HEK293 (cell line): ENCODE measurements at regions of chr17 and their contacts with region 1.

Region 1: DNA sequence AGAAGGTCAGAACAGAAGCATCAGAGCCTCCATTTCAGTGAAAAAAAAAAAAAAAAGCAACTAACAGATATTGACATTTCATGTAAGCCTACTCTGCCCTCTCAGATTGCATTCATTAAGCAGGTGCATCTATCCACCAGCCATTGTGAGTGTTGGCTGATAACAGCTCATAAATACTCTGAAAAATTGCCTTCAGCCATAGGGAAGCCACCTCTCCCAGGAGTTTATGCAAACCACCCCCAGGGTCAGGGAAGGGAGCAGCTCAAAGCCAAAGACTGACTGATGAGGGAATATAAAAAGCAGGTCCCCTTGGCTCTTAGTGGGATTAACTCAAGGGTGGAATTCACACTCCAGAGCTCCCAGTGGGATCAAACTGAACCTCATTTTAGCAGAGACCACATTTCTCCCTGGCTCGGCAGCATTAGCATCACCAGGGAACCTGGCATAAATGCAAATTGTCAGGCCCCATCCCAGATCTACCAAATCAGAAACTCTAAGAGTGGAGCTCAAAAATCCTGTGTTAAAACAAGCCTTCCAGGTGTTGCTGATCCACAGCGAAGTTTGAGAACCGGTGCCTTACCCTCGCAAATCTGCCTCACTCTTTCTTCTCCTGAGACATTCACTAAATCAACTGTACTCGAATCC is 14.2 kb downstream of the APOH start:
- H3K4me3 ChIP-seq: no peak overlapping the region
- H3K27ac ChIP-seq: no peak overlapping the region
- H3K4me1 ChIP-seq: no peaks in the 10 kb centered on the region
- CTCF ChIP-seq: no peak

Region 2: DNA sequence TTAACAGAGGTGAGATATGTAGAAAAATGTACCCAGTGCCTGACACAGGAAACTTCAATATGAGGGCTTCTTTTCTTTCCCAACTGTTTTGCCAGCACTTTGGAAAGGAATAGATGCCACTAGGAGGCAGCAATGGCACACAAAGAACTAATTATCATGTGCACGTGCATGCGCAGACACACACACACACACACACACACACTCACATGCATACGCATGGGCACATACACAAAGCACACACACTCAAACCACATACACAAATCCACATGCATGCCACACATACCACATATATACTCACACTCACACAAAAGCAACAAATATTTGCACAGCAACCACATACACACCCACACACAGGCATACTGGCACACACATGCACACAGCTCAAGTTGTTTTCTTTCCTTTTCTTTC is 14.3 kb before region 1 on chr17:
- CTCF ChIA-PET with region 1: interaction called, 27 read pairs
- POLR2A ChIA-PET with region 1: no interaction called
- H3K4me3 ChIP-seq: no peak overlapping the region
- H3K27ac ChIP-seq: no peak overlapping the region
- H3K4me1 ChIP-seq: no peaks in the 10 kb centered on the region
- CTCF ChIP-seq: peak; percentile 98

Region 3: DNA sequence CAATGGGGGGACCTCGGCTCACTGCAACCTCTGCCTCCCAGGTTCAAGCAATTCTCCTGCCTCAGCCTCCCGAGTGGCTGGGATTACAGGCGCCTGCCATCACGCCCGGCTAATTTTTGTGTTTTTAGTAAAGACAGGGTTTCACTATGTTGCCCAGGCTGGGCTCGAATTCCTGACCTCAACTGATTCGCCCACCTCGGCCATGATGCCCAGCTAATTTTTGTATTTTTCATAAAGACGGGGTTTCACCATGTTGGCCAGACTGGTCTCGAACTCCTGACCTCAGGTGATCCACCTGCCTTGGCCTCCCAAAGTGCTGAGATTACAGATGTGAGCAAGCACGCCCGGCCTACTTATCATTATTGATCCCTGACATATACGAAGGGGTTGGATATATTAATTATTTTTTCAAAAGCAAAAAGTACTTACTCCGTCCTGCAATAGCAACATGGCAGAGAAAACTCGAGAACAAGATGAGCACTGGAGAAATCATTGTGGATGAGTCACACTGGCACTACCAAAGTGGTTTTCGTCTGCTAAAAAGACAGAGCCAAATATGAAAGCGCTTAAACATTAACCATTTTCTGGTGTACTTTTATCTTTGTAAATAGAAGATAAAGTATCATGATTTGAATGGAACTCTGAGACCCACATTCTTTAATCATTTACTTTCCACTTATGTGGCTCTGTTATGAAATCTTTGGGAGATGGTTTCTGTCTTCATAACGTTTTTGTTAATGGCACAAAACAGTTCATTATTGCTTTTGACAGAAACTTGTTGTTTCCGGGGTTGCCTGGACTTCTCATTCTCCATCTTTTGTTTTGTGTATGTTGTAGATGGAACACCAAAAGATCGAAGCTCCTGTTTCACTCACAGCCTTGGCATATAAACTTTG is 14.1 kb after region 1 on chr17 and contains the start of gene APOH:
- CTCF ChIA-PET with region 1: no interaction called
- POLR2A ChIA-PET with region 1: no interaction called
- H3K4me3 ChIP-seq: no peak within 1 kb of the TSS
- H3K27ac ChIP-seq: no peak within 1 kb of the TSS
- H3K4me1 ChIP-seq: no peaks in the 10 kb centered on the region
- CTCF ChIP-seq: no peak